ENCODE measurements at regions of chr14 and their contacts with region 1.

Region 1: GRCh38 chr14:101947906-101948665 is 16.3 kb upstream of the DYNC1H1 start:
- DNase-seq: peak; percentile 100
- ATAC-seq: peak; percentile 97 to 99 (median 99)
- H3K4me3 ChIP-seq: peak overlapping the region; percentile 97
- H3K27ac ChIP-seq: peak overlapping the region; percentile 99
- H3K4me1 ChIP-seq: peaks cover 13% of the 10 kb centered on the region
- H3K27me3 ChIP-seq: no peaks in the 10 kb centered on the region
- CTCF ChIP-seq: no peak

Region 2: DNA sequence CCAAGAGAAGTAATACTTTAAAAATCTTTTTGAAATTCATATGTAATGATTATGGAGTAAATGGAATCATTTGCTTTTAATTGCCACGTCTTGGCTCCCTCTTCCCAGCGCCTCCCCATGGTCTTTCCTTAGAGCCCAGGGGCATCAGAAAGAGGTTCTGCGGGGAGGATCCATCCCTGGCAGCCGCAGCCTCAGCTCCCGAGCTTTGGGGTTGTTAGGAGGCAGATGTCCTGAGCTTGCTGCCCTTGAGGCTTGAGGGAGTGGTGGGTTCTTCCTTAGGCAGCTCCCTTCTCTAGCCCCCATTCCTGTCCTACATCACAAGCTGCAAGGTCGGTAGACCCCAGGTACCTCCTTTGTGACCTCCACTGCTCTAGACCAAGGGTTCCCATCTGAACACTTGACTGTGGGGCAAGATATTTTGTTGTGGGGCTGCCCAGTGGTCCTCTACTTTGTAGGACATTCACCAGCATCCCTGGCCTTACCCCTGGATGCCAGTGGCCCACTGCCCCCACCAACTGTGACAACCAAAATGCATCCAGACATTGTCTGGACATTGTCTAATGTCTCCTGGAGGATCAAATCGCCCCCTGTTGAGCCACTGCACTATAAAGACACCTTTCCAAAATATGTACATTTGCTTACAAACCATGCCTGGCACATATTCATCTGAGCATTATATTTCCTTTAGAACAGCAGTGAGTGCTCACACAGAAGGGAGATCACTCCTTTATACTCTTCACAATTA is 180.3 kb before region 1 on chr14:
- intact Hi-C with region 1: loop called (anchors 5 kb)
- DNase-seq: no peak
- ATAC-seq: no peak
- H3K4me3 ChIP-seq: no peak overlapping the region
- H3K27ac ChIP-seq: no peak overlapping the region
- H3K4me1 ChIP-seq: peaks cover 2% of the 10 kb centered on the region
- H3K27me3 ChIP-seq: no peaks in the 10 kb centered on the region
- CTCF ChIP-seq: no peak

Region 3: GRCh38 chr14:101791919-101792572 is 156.0 kb before region 1 on chr14:
- intact Hi-C with region 1: loop called in 1 of 2 experiments (anchors 10 kb)
- DNase-seq: no peak
- ATAC-seq: peak in 3 of 4 donors; percentile 54 to 70 (median 61)
- H3K4me3 ChIP-seq: peak overlapping the region; percentile 57
- H3K27ac ChIP-seq: peak overlapping the region; percentile 60
- H3K4me1 ChIP-seq: peaks cover 15% of the 10 kb centered on the region
- H3K27me3 ChIP-seq: no peaks in the 10 kb centered on the region
- CTCF ChIP-seq: no peak

Measured in psoas muscle (tissue), 8 donors.